ENCODE measurements at regions of chr14 and their contacts with region 1.

Region 1: GRCh38 chr14:80587075-80587724 is 354.3 kb downstream of the CEP128 start:
- DNase-seq: no peak
- H3K4me3 Mint-ChIP-seq: no peak overlapping the region
- H3K27ac Mint-ChIP-seq: peak overlapping the region; percentile 51
- H3K4me1 Mint-ChIP-seq: peaks cover 14% of the 10 kb centered on the region
- H3K27me3 Mint-ChIP-seq: peaks cover 6% of the 10 kb centered on the region

Region 2: DNA sequence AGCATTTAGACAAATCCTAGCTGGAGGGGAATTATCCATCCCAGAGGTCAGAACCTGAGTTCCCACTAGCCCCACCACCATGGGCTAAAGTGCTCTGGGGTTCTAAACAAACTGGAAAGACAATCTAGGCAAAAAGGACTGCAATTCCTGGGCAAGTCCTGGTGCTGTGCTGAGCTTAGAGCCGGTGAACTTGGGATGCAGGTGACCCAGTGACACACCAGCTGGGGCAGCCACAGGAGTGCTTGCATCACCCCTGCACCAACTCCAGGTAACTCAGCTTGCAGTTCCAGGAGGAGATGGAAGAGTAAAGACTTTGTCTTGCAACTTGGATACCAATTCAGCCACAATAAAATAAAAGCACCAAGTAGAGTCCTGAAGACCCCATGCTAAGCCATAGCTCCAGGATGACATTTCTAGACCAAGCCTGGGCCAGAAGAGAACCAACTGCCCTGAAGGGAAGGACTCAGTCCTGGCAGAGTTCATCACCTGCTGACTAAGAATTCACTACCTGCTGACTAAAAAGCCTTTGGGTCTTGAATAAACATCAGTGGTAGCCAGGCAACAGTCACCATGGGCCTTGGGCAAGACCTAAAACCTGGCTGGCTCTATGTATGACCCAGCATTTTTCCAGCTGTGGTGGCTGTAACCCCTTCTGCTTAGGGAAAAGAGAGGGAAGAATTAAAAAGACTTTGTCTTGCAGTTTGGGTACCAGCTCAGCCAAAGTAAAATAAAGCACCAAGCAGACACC is 152.5 kb before region 1 on chr14:
- intact Hi-C with region 1: no loop called
- DNase-seq: no peak
- H3K4me3 Mint-ChIP-seq: no peak overlapping the region
- H3K27ac Mint-ChIP-seq: no peak overlapping the region
- H3K4me1 Mint-ChIP-seq: no peaks in the 10 kb centered on the region
- H3K27me3 Mint-ChIP-seq: no peaks in the 10 kb centered on the region

Region 3: DNA sequence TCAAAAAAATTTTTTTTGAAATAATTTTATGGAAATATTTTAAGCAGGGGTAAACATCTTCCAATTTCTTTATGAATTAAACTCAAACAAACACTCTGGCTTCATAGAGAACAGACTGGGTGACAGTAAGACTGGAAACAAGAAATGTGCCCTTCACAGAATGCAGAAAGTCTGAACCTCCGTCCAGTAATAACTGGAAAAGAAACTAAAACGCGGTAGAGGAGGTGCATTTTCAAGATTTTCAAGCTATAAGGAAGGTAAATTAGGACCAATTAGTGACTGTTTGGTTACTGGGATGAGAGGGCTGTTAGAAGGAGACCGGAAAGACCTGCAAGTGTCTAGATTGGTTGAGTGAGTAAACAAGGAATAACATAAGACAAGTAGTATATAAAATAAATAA is 108.7 kb after region 1 on chr14:
- intact Hi-C with region 1: loop called (anchors 5 kb)
- DNase-seq: no peak
- H3K4me3 Mint-ChIP-seq: no peak overlapping the region
- H3K27ac Mint-ChIP-seq: no peak overlapping the region
- H3K4me1 Mint-ChIP-seq: no peaks in the 10 kb centered on the region
- H3K27me3 Mint-ChIP-seq: no peaks in the 10 kb centered on the region

Measured in activated T-helper 2 cell treated with anti-CD3 and anti-CD28 coated beads, Interferon-gamma antibody, Interleukin-2, Interleukin-4, amounts not matched to agents 10 μg/mL and 5 μg/mL and 100 μg/mL, durations not matched to agents 14 hours and 24 hours and 36 hours (primary cell).